Left colon (tissue), 2 donors: ENCODE measurements at regions of chr1 and their contacts with region 1.

Region 1: DNA sequence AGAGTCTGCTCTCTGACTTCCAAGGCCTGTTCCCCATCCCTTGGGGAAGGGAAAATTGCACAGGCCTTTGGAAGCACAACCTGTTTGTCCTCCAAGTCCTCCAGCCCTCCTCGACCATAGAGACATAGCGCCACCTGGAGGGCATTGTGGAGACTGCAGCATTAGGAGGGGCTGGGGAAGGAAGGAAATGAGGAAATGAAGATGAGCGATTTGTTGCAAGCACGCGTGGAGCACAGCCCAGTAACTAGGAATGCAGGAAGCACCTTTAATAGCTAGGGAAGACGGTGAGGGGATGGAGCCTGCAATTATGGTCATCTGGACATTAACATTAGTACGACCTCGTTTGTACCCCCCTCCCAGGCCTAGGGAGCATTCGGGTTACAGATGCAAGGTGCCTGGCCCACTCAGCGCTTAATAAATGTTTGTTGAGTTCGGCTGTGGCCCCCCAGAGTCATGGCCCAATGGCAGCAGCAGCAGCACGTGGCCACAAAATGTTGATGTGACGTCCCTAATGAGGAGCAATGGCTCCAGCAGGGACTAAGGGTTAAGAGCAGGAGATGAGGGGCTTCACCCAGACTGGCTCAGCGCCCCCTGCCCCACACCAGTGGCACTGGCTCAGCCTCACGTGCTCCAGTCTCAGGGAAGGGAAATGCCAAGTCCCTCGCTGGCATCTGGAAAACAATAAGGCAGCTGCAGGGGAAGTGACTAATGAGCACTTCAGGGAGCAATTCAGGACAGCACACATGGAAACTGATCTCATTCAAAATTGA is 8.0 kb upstream of the CAMK2N1 start:
- DNase-seq: peak; percentile 77 to 90
- ATAC-seq: peak; percentile 85

Region 2: DNA sequence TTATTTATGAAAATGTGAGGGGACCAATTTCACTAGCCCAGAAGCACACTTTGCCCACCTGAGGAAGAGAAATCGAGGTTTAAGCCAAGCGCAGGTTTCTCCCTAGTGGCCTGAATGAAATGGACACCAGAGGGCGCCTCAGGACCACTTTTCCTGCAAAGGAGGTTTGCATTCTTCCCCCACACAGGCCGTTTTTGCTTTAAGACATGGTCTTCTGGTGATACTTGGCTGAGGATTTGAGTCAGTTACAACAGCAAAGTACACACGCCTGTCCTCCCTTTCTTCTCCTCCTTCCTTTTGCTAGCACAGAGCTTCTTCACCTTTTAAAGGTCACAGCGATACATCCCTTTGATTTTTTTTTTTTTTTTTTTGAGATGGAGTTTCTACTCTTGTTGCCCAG is 576.0 kb before region 1 on chr1:
- intact Hi-C with region 1: loop called (anchors 5 to 10 kb)
- DNase-seq: peak; percentile 60 to 92
- ATAC-seq: peak; percentile 56

Region 3: DNA sequence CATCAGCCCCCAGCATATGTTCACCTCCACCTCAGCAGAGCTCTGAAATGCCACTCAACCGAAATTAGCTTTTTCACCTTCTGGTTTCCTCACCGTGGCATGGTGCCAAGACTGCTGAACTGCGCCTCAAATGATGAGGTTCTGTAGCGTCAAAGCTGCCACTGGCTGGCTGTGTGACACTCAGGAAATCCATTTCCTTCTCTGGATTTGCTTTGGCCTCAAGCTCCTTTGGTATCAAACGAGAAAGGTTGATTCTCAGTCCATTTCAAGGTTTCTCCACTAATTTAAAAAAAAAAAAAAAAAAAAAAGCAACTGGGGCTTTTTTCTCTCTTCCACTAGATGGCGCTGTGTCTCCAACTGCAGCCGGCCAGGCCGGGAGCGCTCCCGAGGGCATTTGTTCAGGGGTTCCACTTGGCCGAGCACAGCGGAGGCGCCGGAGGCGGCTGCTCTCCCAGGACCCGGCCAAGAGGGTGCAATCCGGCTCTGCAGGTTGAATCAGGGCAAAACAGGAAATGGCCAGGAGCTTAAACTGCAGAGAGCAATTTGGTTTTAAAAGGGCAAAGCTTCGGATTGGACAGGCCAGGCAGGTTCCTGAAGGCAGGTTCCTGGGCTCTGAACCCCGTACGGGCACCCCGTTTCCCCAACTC is 281.2 kb before region 1 on chr1:
- intact Hi-C with region 1: loop called in 1 of 2 experiments (anchors 2 kb)
- DNase-seq: peak; percentile 76 to 79
- ATAC-seq: peak; percentile 74

Region 4: GRCh38 chr1:20367116-20367585 is 126.9 kb before region 1 on chr1:
- intact Hi-C with region 1: loop called in 1 of 2 experiments (anchors 5 kb)
- DNase-seq: peak; percentile 47 to 58
- ATAC-seq: peak; percentile 79